AG04450 (cell line): ENCODE measurements at regions of chr16 and their contacts with region 1.

Region 1: DNA sequence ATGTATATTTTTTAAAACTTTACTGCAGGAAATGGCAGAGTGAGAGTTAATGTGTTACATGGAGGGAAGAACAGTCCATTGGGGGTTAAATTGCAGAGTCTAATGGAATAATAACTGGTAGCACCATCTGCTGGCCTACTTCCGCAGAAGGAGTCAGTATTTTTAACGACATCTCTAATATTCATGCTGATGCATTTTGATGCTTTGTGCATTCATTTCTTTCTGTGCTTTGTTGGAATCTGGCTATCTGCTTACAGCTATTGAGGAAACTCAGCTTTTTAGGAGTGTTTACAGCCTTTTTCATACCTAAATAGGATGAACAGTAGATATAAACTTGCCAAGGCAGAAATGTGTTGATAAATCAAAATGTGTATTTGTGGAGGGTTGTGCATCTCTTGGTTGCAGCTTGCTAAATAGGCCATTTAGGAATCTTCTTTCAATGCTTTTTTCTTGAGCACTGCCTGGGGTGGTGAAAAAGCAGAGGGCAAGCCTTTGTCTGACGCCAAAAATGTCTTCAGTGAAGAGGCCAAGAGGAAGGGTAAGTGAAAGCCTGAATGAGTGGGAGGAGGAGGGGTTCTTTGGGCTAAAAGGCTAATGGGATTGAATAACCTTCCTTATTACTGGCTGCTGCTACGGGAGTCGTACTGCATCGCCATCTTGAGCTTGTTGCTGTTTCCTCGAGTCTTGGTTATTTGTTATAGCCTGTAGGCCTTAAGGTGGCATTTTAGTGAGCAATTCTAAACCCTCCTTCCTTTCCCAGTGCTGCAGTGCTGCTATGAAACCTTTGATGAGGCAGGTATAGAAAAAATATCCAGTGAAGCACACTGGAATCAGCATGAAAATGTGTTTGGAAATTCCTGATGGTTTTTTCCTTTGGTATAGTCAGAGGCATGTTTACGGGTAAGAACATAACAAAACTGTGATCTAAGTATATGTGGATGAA is 153.3 kb downstream of the CHD9 start:
- DNase-seq: peak; percentile 46
- H3K4me3 ChIP-seq: peak overlapping the region; percentile 70
- H3K27ac ChIP-seq: peak overlapping the region; percentile 82
- H3K27me3 ChIP-seq: no peaks in the 10 kb centered on the region
- CTCF ChIP-seq: peak; percentile 71

Region 2: DNA sequence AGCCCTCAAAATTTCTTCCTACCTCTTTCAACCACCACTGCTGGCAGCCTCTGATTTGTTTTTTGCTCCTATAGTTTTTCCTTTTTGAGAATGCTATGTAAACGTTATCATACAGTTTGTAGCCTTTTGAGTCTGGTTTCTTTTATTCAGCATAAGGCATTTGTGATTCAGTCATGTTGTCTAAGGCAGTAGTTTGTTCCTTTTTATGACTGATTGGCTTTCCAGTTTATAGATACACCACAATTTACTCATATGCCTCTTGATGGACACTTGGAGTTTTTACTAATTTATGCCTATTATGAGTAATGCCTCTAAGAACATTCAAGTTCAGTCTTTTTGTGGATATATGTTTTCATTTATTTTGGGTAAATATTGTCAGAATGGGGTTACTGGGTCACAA is 16.7 kb before region 1 on chr16:
- CTCF ChIA-PET with region 1: interaction called, 13 read pairs
- POLR2A ChIA-PET with region 1: no interaction called
- DNase-seq: no peak
- H3K4me3 ChIP-seq: no peak overlapping the region
- H3K27ac ChIP-seq: no peak overlapping the region
- H3K27me3 ChIP-seq: no peaks in the 10 kb centered on the region
- CTCF ChIP-seq: no peak

Region 3: DNA sequence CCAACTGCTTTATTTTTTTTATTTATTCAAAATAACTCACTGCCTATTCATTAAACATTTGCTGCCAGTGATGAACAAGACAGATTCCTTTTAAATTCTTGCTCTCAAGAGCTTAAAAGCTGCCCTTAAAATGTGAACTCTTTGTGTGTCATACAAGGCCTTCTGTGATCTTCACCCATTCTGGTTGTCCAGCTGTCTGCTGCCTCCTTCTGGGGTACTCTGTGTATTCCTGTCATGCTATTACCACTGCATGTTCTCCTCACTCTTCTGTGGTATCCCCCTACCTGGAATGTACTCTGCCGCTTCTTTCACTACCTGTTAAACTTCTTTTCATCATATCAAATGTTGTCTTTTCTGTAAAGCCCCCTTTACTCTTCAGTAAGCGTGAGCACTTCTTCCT is 12.5 kb after region 1 on chr16:
- CTCF ChIA-PET with region 1: interaction called, 23 read pairs
- POLR2A ChIA-PET with region 1: no interaction called
- DNase-seq: no peak
- H3K4me3 ChIP-seq: no peak overlapping the region
- H3K27ac ChIP-seq: no peak overlapping the region
- H3K27me3 ChIP-seq: no peaks in the 10 kb centered on the region
- CTCF ChIP-seq: peak; percentile 41; the same call in 1 of the 2 replicates

Region 4: GRCh38 chr16:53257001-53257400 is 48.9 kb after region 1 on chr16:
- CTCF ChIA-PET with region 1: no interaction called
- POLR2A ChIA-PET with region 1: no interaction called
- DNase-seq: peak; percentile 0
- H3K4me3 ChIP-seq: no peak overlapping the region
- H3K27ac ChIP-seq: no peak overlapping the region
- H3K27me3 ChIP-seq: no peaks in the 10 kb centered on the region
- CTCF ChIP-seq: no peak

Region 5: GRCh38 chr16:54143934-54144629 is 936.0 kb after region 1 on chr16:
- CTCF ChIA-PET with region 1: no interaction called
- POLR2A ChIA-PET with region 1: no interaction called
- DNase-seq: no peak
- H3K4me3 ChIP-seq: no peak overlapping the region
- H3K27ac ChIP-seq: no peak overlapping the region
- H3K27me3 ChIP-seq: peaks cover 7% of the 10 kb centered on the region
- CTCF ChIP-seq: no peak